Tibial artery (tissue), 4 donors: ENCODE measurements at regions of chr20 and their contacts with region 1.

Region 1: GRCh38 chr20:44080646-44081267 is 106.2 kb downstream of the JPH2 start:
- DNase-seq: peak in 1 of 2 donors; percentile 76
- H3K4me3 ChIP-seq: no peak overlapping the region
- H3K27ac ChIP-seq: no peak overlapping the region
- H3K4me1 ChIP-seq: peaks cover 0 to 4% (median 0%) of the 10 kb centered on the region in 4 donors
- H3K27me3 ChIP-seq: no peaks in the 10 kb centered on the region
- CTCF ChIP-seq: peak; percentile 97

Region 2: DNA sequence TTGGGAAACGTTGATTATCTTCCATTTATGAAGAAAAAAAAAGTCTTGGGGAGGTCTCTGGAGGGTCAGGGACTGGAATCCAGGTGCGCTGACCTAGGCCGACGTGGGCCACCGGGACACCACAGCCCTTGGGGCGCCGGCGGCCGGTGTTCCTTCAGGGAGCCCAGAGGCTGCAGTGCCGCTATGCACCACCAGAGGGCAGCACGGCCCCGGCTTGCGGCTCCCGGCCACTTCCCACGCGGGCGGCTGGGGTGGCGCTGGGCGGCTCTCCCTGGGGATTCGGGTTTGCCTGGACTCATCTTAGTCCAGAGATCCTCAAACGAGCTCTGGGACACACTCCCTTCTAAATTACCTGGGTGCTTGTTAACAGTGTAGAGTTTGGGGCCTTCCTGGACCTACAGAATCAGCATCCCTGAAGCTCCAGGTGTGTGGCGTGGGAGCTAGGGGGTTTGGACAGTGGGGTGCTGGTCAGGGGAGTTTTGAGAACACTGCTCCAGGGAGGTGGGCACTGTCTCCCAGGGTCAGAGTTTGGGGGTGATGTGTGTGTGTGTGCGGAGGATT is 330.9 kb before region 1 on chr20:
- intact Hi-C with region 1: loop called (anchors 1 kb)
- DNase-seq: peak; percentile 51 to 73
- H3K4me3 ChIP-seq: no peak overlapping the region
- H3K27ac ChIP-seq: no peak overlapping the region
- H3K4me1 ChIP-seq: peaks cover 0 to 5% (median 0%) of the 10 kb centered on the region in 4 donors
- H3K27me3 ChIP-seq: peaks cover 0 to 41% of the 10 kb centered on the region in 2 donors
- CTCF ChIP-seq: peak; percentile 90 to 98